GM13976 (cell line): ENCODE measurements at regions of chr4 and their contacts with region 1.

Region 1: DNA sequence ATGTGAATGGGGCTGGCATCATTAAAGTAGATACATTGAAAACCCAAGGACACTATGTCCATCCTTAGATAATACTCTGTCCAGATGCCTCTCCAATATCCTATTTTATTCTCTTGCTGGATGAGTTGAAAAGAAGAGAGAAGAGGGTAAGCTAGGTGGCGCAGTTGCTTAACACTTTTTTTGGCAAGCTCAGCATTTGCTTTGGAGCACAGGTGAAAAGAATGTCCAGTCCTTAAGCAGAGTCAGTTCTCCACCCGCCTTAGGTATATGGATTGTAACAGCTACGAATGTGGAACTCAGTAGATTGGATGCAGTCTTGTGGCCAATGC is 208.4 kb downstream of the NWD2 start:
- DNase-seq: peak; percentile 76
- CTCF ChIP-seq: peak; percentile 57

Region 2: GRCh38 chr4:36794716-36795115 is 658.2 kb before region 1 on chr4:
- in situ Hi-C with region 1: no loop called
- DNase-seq: no peak
- CTCF ChIP-seq: no peak

Region 3: GRCh38 chr4:37040816-37041215 is 412.1 kb before region 1 on chr4:
- in situ Hi-C with region 1: no loop called
- DNase-seq: no peak
- CTCF ChIP-seq: no peak

Region 4: DNA sequence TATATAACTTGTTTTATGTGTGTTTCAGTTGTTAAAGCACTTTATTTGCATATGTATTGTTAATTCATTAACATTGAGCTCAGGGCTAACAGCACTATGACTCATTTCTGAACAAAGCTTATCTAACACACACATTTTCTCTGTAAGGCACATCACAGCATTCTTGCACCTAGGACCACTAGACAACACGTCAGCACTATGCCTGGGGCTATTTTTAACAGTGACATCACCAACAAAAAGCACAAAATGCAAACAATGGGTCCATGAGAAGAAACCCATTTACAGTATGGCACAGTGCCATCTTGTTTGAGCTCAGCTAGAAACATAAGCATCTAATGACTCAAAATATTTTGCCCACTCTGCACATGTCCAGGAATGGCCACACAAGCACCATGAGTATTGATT is 108.9 kb after region 1 on chr4:
- in situ Hi-C with region 1: loop called (anchors 10 kb)
- DNase-seq: no peak
- CTCF ChIP-seq: no peak

Region 5: DNA sequence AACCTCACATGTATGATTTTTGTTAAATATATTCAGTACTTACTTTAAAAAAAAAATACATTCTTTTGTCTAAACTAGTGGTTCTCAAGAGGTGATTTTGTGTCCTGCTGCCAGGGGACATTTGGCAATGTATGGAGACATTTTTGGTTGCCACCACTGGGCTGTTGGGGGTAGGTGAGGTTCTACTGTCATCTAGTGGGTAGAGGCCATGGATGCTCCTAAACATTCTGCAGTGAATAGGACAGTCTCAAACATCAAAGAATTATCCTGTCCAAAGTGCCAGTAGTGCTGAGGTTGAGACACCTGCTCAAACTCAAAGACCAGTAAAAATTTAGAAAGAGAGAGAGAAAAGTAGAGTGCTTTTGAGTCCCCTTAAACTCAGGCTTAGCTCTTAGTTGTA is 340.6 kb after region 1 on chr4:
- in situ Hi-C with region 1: loop called (anchors 25 kb)
- DNase-seq: no peak
- CTCF ChIP-seq: peak; percentile 21